ENCODE measurements at regions of chr20 and their contacts with region 1.

Region 1: GRCh38 chr20:21808863-21809664 is 103.6 kb downstream of the PAX1 start:
- DNase-seq: no peak

Region 2: GRCh38 chr20:21755966-21756365 is 53.1 kb before region 1 on chr20:
- intact Hi-C with region 1: no loop called
- DNase-seq: no peak

Region 3: DNA sequence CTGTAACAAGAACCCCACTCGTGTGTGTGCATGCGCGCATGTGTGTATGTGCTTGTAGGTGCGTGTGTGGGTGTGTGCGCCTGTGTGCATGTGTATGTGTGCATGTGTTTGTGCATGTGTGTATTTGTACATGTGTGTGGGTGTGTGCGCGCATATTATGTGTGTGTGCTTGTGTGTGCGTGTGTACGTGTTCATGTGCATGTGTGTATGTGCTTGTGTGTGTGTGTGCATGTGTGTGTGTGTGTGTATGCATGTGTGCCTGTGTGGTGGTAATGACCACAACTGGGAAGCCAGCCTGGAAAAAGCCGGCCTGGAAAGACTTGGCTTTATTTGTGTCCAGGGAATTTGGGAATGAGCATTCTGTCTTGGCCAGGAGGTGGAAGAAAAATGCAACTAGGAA is 53.9 kb after region 1 on chr20:
- intact Hi-C with region 1: no loop called
- DNase-seq: no peak

Region 4: GRCh38 chr20:22106308-22106938 is 297.4 kb after region 1 on chr20:
- intact Hi-C with region 1: loop called (anchors 2 kb)
- DNase-seq: no peak

Region 5: DNA sequence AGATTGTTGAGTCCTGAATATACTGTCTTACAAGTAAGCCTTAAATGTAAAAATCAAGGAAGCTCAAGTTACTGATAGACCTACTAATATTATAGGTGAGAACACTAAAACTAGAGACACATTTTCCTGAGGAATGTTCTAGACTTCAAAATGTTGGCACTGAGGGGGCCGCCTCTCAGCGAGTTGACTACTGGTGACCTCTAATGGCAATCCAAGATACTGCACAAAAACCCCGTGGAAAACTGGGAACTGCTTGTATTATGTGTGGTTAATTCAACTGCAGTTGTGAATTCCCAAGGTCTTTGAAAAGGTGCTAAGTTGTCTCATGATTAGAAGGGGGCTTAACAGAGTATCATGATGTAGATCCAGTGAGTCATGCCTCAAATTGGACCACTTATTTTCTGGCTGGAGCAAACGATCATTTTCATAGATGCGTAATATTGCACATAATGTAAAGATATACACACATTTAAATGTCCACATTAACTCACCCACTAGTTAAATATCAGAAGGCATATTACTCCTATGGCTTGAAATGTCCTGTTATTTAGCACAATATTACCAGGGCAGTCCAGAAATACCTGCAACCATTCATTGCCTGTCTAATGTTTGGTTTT is 439.1 kb after region 1 on chr20:
- intact Hi-C with region 1: loop called (anchors 10 kb)
- DNase-seq: no peak

Region 6: GRCh38 chr20:22438932-22439331 is 629.9 kb after region 1 on chr20:
- intact Hi-C with region 1: no loop called
- DNase-seq: no peak